ENCODE measurements at regions of chr2 and their contacts with region 1.

Region 1: DNA sequence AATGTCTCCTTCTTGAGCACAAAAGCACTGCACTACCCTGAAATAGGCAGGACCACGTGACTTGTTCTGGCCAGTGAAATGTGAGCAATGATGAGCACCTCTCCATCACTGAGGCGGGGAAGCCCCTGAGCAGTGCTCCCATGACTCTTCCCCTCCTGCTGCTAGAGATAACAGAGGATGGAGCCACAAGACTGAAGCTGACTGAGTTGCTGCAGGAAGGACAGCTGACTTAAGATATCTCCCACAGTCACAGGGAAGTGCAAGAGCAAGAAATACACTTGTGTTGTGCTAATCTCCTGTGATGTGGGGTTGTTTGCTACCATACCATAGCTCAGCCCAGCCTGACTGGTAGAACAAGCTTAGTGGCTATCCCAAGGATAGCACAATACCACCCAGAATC is 38.7 kb downstream of the STK39 start:
- DNase-seq: no peak

Region 2: DNA sequence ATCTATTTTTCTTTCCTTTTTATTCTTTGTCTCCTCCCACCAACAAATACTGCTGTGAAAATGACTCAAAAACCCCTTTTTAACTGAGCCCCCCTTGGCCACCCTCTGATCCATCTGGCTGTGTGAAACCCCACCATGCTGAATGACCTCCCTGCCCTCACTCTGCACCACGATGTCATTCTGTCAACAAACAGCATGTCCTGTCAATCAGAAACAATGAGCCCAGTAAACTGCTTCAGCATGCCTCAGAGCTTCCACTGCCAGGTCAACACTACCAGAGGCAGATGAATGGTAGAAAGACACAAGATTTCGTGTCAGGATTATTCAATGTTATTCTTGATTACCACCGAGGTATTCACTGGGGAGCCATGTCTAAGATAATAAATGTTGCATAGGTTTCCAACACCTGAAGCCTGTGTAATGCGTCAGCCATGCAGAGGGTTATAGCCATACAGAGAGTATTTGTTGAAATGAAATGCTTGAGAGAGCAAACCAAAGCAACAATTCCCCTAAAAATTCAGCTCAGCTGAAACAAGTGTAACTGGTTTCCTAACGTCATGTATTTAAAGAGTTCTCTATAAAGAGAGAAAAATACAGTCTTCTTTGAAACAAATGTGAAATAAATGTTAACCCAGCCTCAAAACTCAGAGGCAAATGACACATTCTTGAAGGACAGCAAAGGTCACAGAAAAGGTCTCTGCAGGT is 1077.0 kb after region 1 on chr2:
- intact Hi-C with region 1: loop called in 1 of 2 experiments (anchors 10 kb)
- DNase-seq: no peak